Activated CD8-positive, alpha-beta T cell treated with anti-CD3 and anti-CD28 coated beads, Interleukin-2, amount 10 ng/mL, durations not matched to agents 7 days and 5 days (primary cell): ENCODE measurements at regions of chr3 and their contacts with region 1.

Region 1: GRCh38 chr3:98563661-98564281 is 29.6 kb downstream of the CPOX start:
- DNase-seq: no peak
- ATAC-seq: peak; percentile 15
- H3K4me3 Mint-ChIP-seq: peak overlapping the region; percentile 58
- H3K27ac Mint-ChIP-seq: peak overlapping the region; percentile 96
- H3K4me1 Mint-ChIP-seq: peaks cover 90% of the 10 kb centered on the region
- H3K27me3 Mint-ChIP-seq: no peaks in the 10 kb centered on the region

Region 2: DNA sequence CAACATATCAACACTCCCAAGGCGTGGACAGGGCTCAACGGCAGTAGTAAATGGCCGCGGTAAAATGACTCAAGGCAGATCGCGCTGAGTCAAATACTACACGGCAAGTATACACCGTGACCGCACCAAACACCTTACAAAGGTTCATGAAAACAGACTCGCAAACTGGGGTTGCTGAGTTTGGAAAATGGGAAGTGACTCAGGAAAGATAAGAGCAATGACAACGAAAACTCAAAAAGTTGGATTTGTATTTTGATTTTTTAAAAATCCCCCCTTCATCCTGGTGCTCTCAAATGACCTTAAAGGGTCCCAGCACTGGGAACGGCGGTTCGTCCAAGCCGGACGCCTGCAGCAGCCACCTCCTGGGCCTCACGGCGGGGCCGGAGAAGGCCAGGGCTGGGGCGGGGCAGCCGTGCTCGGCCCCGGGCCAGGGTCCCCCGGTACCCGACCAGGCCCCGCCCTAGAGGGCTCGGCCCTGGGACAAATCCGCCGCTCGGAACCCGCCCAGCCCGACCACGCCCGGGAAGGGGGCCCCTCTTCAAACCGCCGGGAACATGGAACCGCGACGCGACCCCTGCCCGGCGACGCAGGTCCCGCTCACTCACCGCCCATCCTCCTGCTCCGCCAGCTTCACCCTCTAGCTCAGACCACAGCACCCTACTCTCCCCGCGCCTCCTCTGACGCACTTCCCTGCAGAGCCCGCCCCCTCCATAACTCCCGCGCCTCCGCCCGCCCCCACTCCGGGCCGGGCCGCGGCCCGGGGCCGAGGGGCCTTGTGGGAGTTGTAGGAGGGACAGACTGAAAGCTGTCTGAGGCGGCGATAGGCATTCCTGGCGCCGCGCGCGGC is 41.3 kb before region 1 on chr3 and contains the start of gene CLDND1:
- CTCF ChIA-PET with region 1: interaction called, 36 read pairs
- POLR2A ChIA-PET with region 1: interaction called, 113 read pairs
- DNase-seq: peak; percentile 97
- ATAC-seq: peak; percentile 95
- H3K4me3 Mint-ChIP-seq: peak within 1 kb of the TSS; percentile 93
- H3K27ac Mint-ChIP-seq: peak within 1 kb of the TSS; percentile 97
- H3K4me1 Mint-ChIP-seq: peaks cover 60% of the 10 kb centered on the region
- H3K27me3 Mint-ChIP-seq: no peaks in the 10 kb centered on the region
- total RNA-seq, gene CLDND1: 410 to 414 TPM

Region 3: DNA sequence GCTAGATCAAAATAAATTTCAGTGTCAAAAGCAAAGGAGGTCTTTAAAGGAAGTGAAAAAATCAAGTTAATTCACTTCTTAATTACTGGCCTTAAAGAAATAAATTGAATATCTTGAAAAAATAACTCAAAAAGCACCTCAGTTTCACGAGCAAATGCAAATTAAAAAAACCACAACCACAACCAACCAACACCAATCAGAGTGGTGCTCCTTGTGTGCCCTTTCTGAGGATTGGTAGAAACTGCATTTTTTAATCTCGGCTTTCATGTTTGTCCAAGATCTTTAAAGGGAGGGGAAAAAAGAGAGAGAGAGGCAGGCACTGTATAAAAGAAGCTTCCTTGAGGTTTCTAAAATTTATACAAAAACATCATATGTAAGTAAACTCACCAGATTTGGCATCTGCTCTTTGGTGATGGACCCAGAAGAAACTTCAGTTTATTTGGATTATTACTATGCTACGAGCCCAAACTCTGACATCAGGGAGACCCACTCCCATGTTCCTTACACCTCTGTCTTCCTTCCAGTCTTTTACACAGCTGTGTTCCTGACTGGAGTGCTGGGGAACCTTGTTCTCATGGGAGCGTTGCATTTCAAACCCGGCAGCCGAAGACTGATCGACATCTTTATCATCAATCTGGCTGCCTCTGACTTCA is 32.0 kb before region 1 on chr3 and contains the start of gene GPR15:
- CTCF ChIA-PET with region 1: interaction called, 6 read pairs
- POLR2A ChIA-PET with region 1: interaction called, 217 read pairs
- DNase-seq: no peak
- ATAC-seq: peak; percentile 43
- H3K4me3 Mint-ChIP-seq: peak within 1 kb of the TSS; percentile 57
- H3K27ac Mint-ChIP-seq: peak within 1 kb of the TSS; percentile 74
- H3K4me1 Mint-ChIP-seq: peaks cover 57% of the 10 kb centered on the region
- H3K27me3 Mint-ChIP-seq: no peaks in the 10 kb centered on the region
- total RNA-seq, gene GPR15: 18.9 to 19.7 TPM

Region 4: GRCh38 chr3:98540346-98540745 is 23.4 kb before region 1 on chr3:
- CTCF ChIA-PET with region 1: interaction called, 6 read pairs
- POLR2A ChIA-PET with region 1: interaction called, 217 read pairs
- DNase-seq: peak; percentile 54
- ATAC-seq: peak; percentile 61
- H3K4me3 Mint-ChIP-seq: peak overlapping the region; percentile 24
- H3K27ac Mint-ChIP-seq: peak overlapping the region; percentile 79
- H3K4me1 Mint-ChIP-seq: peaks cover 67% of the 10 kb centered on the region
- H3K27me3 Mint-ChIP-seq: no peaks in the 10 kb centered on the region

Region 5: GRCh38 chr3:98657457-98657856 is 93.7 kb after region 1 on chr3:
- CTCF ChIA-PET with region 1: no interaction called
- POLR2A ChIA-PET with region 1: no interaction called
- DNase-seq: peak; percentile 64
- ATAC-seq: peak; percentile 92
- H3K4me3 Mint-ChIP-seq: no peak overlapping the region
- H3K27ac Mint-ChIP-seq: no peak overlapping the region
- H3K4me1 Mint-ChIP-seq: peaks cover 3% of the 10 kb centered on the region
- H3K27me3 Mint-ChIP-seq: peaks cover 26% of the 10 kb centered on the region